Activated CD4-positive, alpha-beta T cell treated with anti-CD3 and anti-CD28 coated beads, Interleukin-2, amount 10 ng/mL, durations not matched to agents 24 days and 14 days (primary cell): ENCODE measurements at regions of chr1 and their contacts with region 1.

Region 1: DNA sequence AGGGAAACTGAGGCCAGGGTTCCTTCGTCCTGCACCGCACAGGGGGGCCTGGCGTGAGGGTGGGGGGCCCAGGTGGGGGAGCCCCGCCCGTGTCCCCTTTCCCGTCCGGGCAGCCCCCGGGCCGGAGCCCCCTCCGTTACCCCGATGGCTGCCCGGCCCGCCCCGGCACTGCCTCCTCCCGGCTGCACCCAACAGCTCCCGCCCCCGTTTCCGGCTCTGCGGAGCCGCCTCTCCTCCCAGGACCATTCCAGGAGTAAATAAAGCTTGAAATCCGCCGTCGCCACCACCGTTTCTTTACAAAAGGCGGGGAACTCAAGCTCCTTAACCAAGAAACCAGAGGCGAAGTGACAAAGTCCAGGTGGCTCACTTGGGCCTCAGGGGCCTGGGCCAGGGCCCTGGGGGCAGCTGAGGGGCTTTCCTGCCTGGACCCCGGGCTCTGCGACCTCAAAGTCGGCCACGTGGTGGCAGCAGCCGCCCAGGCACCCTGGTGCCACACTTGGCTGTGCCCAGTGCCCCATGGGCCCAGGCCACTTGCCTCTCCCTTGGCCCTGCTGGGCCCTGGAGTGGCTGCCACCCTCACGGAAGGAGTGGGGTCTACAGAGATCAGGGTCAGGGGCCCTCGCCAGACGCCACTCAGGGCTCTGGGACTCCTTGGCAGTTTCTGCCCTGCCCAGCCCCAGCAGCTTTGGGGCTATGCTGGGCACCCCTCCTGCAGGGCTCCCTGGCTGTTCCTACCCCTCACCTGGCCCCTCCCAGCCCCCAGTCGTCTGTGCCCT is 514 bp upstream of the FAAP20 start:
- DNase-seq: peak; percentile 97
- H3K4me3 Mint-ChIP-seq: peak overlapping the region; percentile 90
- H3K27ac Mint-ChIP-seq: peak overlapping the region; percentile 93
- H3K4me1 Mint-ChIP-seq: peaks cover 17% of the 10 kb centered on the region
- H3K27me3 Mint-ChIP-seq: no peaks in the 10 kb centered on the region

Region 2: DNA sequence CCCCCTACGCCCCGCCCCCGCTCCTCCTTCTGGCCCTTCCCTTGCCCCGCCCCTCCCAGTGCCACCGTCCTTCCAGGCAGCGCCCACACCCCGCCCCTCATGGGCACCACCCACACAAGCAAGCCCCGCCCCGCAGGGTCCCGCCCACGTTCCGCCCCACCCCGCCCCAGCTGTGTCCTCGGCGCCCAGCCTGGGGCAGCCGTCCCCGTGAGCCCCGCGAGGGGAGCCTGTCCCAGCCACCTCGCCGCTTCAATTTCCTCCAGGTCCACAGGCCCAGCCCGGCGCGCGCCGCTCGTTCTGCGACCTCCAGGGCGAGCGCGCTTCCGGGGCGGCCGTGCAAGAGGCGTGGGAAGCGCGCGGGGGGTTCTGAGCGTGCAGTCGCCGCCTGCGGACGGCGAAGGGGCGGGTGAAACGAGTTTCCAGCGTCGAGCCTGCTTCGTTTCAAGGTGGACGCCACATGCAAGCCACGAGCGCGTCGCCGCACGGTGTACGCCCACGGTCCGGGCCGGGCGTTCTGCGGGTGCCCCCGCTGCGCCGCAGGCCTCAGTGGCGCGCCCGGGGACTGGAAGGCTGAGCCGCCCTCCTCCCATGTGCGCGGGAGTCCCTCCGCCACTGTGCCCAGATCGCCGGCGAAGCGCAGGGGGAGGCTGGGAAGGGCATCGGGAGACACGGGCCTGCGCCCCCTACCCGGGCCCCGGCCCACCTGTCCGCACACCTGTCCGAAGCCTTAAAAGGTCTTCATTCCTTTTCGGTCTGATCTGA is 10.3 kb after region 1 on chr1:
- intact Hi-C with region 1: loop called (anchors 1 kb)
- DNase-seq: peak; percentile 96
- H3K4me3 Mint-ChIP-seq: peak overlapping the region; percentile 65
- H3K27ac Mint-ChIP-seq: peak overlapping the region; percentile 62
- H3K4me1 Mint-ChIP-seq: peaks cover 2% of the 10 kb centered on the region
- H3K27me3 Mint-ChIP-seq: peaks cover 2% of the 10 kb centered on the region

Region 3: DNA sequence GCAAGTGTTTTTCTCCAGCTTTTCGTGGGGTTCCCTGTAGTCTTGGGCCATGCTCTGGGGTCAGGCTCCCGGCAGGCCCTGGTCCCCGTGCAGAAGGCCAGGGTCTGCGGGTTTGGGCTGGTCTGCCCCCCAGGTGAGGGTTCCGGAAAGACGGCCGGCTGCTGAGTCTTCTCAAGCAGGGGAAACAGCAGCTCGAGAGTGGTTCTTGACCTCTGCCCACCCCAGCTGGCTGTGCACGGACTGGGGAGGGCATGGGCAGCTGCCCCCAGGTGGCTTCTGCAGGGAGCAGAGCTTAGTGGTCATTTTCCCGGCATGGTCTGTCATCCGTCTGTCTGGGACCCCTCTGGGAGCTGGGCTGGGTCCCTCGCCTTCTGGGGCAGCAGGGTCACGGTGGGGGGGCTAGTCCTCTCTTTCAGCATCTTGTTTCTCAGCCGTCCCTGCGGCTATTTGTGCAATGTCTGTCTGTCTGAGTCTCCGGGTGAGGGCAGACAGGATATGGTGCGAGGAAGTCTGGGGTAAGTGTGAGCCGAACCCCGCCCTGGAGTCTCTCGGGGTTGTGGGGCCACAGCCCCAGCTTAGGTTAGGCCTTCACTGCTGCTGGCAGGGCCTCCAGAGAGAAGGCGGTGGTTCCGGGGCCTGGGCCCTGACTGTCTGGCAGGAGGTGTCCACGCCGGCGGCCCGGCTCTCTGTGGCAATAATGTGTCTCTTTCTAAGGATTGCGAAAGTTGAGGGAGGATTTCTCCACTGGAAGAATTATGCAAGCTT is 39.1 kb after region 1 on chr1:
- intact Hi-C with region 1: loop called (anchors 2 kb)
- DNase-seq: peak; percentile 91
- H3K4me3 Mint-ChIP-seq: peak overlapping the region; percentile 93
- H3K27ac Mint-ChIP-seq: peak overlapping the region; percentile 88
- H3K4me1 Mint-ChIP-seq: peaks cover 62% of the 10 kb centered on the region
- H3K27me3 Mint-ChIP-seq: no peaks in the 10 kb centered on the region

Region 4: DNA sequence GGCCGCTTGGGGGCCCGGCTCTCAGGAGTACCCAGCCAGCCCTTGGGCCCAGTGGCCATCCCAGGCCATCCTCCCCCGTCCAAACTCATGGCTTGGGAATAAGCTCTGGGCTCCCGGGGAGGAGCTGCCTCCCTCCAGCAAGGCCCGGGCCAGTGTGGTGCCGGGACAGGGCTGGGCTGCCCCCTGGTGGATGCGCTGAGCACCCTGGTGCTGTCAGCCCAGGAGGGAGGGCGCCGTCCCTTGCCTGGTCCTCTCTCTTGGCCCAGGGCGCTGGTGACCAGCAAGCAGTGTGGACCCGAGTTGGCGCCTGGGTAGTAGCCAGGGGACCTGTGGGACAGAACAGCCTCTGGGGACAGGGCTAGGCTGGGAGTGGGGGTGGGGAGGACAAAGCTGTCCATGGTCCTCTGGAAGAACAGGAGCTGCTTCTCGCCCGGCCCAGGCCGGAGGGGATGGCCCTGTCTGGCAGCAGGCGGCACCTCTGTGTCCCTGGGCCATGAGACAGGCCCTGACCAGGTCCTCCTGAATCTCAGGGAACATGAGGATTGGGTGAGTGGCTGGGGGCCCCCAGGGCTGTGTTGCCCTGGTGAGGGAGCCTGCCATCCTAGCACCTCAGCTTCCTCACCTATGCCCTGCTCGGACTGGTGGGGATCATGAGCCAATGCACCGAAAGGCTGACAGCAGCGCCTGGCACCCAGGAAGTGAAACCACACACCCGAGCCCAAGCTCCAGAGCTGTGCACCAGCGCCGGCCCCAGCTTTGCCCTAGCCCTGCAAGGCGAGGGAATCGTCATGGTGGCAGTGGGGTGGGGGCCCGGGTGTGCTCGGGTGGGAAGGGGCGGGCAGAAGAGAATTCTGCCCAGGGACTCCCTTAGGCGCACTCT is 186.9 kb after region 1 on chr1:
- intact Hi-C with region 1: loop called (anchors 1 kb)
- DNase-seq: peak; percentile 94
- H3K4me3 Mint-ChIP-seq: no peak overlapping the region
- H3K27ac Mint-ChIP-seq: no peak overlapping the region
- H3K4me1 Mint-ChIP-seq: peaks cover 2% of the 10 kb centered on the region
- H3K27me3 Mint-ChIP-seq: no peaks in the 10 kb centered on the region

Region 5: GRCh38 chr1:2525920-2526823 is 331.1 kb after region 1 on chr1 and contains the start of gene PANK4:
- intact Hi-C with region 1: loop called (anchors 5 kb)
- DNase-seq: peak; percentile 97
- H3K4me3 Mint-ChIP-seq: peak within 1 kb of the TSS; percentile 85
- H3K27ac Mint-ChIP-seq: peak within 1 kb of the TSS; percentile 96
- H3K4me1 Mint-ChIP-seq: peaks cover 38% of the 10 kb centered on the region
- H3K27me3 Mint-ChIP-seq: peaks cover 15% of the 10 kb centered on the region
- total RNA-seq, gene PANK4: 55.2 and 56.7 TPM in 2 replicates

Region 6: GRCh38 chr1:2545759-2546514 is 350.9 kb after region 1 on chr1:
- intact Hi-C with region 1: loop called (anchors 2 kb)
- DNase-seq: peak; percentile 97
- H3K4me3 Mint-ChIP-seq: peak overlapping the region; percentile 93
- H3K27ac Mint-ChIP-seq: peak overlapping the region; percentile 95
- H3K4me1 Mint-ChIP-seq: peaks cover 11% of the 10 kb centered on the region
- H3K27me3 Mint-ChIP-seq: peaks cover 8% of the 10 kb centered on the region